ENCODE measurements at regions of chrX and their contacts with region 1.

Region 1: DNA sequence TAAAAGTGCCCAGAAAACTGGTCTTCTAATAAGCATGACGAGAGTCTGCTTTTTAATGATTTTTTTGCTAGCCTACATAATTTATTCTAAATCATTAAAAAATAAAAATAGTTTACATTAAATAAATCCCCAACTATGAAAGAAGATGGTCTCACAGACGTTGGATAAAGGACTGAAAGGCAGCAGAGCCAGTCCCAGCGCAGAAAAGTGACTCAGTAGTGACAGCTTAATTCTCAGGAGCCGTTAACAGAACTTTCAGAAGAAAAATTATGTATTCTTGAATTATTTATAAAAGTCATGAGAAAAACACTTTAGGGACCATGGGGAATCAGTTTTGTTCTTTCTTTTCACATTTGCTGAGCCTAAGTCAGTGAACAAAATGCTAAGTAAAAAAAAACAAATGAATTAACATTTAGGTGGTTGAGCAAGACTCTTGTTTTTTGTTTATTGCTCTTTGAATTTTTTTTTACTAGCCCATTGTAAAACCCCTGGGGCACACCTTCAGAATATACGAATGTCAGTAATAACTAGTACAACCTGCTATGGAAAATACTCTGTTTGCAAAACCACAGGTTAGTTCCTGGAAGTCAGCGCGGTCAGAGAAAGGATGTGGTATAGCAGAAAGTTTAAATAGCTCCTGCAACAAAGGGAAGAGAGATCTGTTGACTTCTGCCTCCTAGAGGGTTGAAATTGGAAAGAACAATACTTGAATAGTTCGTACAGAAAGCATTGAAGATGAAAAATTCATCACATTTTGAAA is 50.4 kb upstream of the CCDC160 start:
- DNase-seq: peak; percentile 85
- H3K4me3 Mint-ChIP-seq: peak overlapping the region; percentile 25
- H3K27ac Mint-ChIP-seq: peak overlapping the region; percentile 24
- H3K4me1 Mint-ChIP-seq: peaks cover 14% of the 10 kb centered on the region
- H3K27me3 Mint-ChIP-seq: no peaks in the 10 kb centered on the region

Region 2: GRCh38 chrX:133921764-133922389 is 264.7 kb before region 1 on chrX:
- CTCF ChIA-PET with region 1: no interaction called
- intact Hi-C with region 1: loop called (anchors 1 kb)
- DNase-seq: peak; percentile 60
- H3K4me3 Mint-ChIP-seq: no peak overlapping the region
- H3K27ac Mint-ChIP-seq: no peak overlapping the region
- H3K4me1 Mint-ChIP-seq: peaks cover 17% of the 10 kb centered on the region
- H3K27me3 Mint-ChIP-seq: no peaks in the 10 kb centered on the region

Region 3: DNA sequence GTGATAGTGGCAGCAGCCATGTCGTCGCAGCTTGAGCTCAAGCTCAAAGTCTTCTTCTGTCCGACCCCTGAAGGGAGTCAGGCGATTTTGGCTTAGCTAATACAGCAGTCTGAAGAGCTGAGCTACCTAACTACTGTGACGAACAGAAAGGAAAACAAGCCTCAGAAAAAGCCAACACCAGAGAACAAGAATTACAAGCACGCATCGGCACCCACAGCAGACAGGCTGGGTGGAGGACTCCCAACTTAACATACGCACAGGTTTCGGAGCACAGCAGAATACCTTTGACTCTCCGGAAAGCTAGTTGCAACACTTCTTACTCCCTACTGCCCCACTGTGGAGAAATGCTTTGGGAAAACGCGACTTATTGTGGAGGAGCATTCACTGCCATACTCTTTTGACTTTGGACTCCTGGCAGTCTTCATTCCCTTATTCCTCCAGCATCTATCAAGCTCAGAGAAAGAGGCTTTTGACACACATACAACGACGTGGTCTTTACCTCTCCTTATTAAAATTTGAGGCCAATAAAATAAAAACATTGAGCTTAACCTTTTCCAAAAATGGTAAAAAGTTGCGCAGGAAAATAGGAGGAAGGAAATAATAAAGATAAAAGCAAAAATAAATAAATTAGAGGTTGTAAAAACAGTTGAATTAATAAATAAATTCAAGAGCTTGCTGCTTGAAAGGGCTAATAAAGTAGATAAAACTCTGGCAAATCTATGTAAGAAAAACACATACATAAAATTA is 159.8 kb before region 1 on chrX:
- CTCF ChIA-PET with region 1: interaction called, 3 read pairs
- intact Hi-C with region 1: loop called (anchors 2 kb)
- DNase-seq: peak; percentile 64
- H3K4me3 Mint-ChIP-seq: peak overlapping the region; percentile 29
- H3K27ac Mint-ChIP-seq: no peak overlapping the region
- H3K4me1 Mint-ChIP-seq: peaks cover 6% of the 10 kb centered on the region
- H3K27me3 Mint-ChIP-seq: no peaks in the 10 kb centered on the region

Region 4: GRCh38 chrX:134171661-134172587 is 14.6 kb before region 1 on chrX:
- CTCF ChIA-PET with region 1: interaction called, 4 read pairs
- intact Hi-C with region 1: loop called (anchors 1 kb)
- DNase-seq: peak; percentile 53
- H3K4me3 Mint-ChIP-seq: peak overlapping the region; percentile 77
- H3K27ac Mint-ChIP-seq: peak overlapping the region; percentile 87
- H3K4me1 Mint-ChIP-seq: peaks cover 19% of the 10 kb centered on the region
- H3K27me3 Mint-ChIP-seq: peaks cover 3% of the 10 kb centered on the region

Region 5: GRCh38 chrX:134251241-134251640 is 64.7 kb after region 1 on chrX:
- CTCF ChIA-PET with region 1: no interaction called
- intact Hi-C with region 1: no loop called
- DNase-seq: no peak
- H3K4me3 Mint-ChIP-seq: no peak overlapping the region
- H3K27ac Mint-ChIP-seq: no peak overlapping the region
- H3K4me1 Mint-ChIP-seq: peaks cover 5% of the 10 kb centered on the region
- H3K27me3 Mint-ChIP-seq: no peaks in the 10 kb centered on the region

Measured in activated naive CD4-positive, alpha-beta T cell treated with anti-CD3 and anti-CD28 coated beads for 36 hours (primary cell).